PC-3 (cell line): ENCODE measurements at regions of chr2 and their contacts with region 1.

Region 1: GRCh38 chr2:231452799-231453508 is 11.3 kb downstream of the NCL start:
- DNase-seq: peak; percentile 23
- ATAC-seq: peak; percentile 42
- H3K4me3 ChIP-seq: no peak overlapping the region
- H3K27ac ChIP-seq: no peak overlapping the region
- H3K4me1 ChIP-seq: no peaks in the 10 kb centered on the region
- H3K27me3 ChIP-seq: no peaks in the 10 kb centered on the region
- CTCF ChIP-seq: no peak

Region 2: DNA sequence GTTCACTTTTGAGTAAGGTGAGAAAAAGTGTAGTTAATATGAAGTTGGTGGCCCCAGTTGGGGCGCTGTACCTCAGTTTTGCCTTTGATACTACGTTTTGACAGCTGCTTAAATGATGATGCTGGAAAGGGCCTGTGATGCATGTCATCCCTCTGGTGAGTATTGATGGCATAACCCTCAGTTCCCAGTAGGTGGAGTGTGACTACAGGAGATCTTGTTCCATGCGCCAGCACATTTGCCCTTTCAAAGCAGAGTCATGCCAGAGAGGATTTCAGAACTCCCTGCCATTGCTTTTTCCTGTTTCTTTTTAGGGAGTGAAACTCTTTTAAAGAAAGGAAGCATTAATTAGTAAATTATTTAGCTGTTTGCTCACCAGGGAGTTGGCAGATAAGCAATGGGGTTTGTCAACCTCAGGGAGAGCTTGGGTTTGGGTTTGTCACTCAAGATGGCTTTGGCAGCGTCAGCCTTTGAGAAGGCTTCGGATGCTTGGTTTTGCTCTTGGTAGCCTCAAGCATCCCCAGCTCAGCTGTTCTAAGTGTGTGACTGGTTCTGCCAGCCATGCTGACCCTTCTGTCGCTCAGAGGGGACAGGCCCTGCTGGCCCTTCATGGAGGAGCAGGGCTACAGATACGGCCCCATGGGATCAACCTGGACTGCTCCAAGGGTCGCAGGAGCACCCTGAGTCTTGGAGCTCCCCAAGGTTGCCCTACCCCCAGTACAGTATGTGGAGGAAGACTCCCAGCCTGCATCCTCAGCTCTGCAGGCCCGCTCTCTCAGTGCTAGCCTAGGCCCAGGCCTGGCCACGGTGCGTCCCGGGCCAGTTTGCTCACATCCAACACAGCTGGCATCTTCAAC is 225.4 kb before region 1 on chr2:
- CTCF ChIA-PET with region 1: no interaction called
- POLR2A ChIA-PET with region 1: no interaction called
- intact Hi-C with region 1: loop called (anchors 1 kb)
- DNase-seq: peak; percentile 84
- ATAC-seq: peak; percentile 97
- H3K4me3 ChIP-seq: no peak overlapping the region
- H3K27ac ChIP-seq: no peak overlapping the region
- H3K4me1 ChIP-seq: no peaks in the 10 kb centered on the region
- H3K27me3 ChIP-seq: no peaks in the 10 kb centered on the region
- CTCF ChIP-seq: peak; percentile 89

Region 3: GRCh38 chr2:231399853-231400680 is 52.9 kb before region 1 on chr2:
- CTCF ChIA-PET with region 1: interaction called, 16 read pairs
- POLR2A ChIA-PET with region 1: no interaction called
- intact Hi-C with region 1: no loop called
- DNase-seq: peak; percentile 67
- ATAC-seq: peak; percentile 92
- H3K4me3 ChIP-seq: no peak overlapping the region
- H3K27ac ChIP-seq: peak overlapping the region; percentile 66
- H3K4me1 ChIP-seq: peaks cover 37% of the 10 kb centered on the region
- H3K27me3 ChIP-seq: no peaks in the 10 kb centered on the region
- CTCF ChIP-seq: no peak

Region 4: GRCh38 chr2:231601349-231602229 is 148.6 kb after region 1 on chr2:
- CTCF ChIA-PET with region 1: no interaction called
- POLR2A ChIA-PET with region 1: no interaction called
- intact Hi-C with region 1: no loop called
- DNase-seq: peak; percentile 85
- ATAC-seq: peak; percentile 57
- H3K4me3 ChIP-seq: no peak overlapping the region
- H3K27ac ChIP-seq: no peak overlapping the region
- H3K4me1 ChIP-seq: peaks cover 16% of the 10 kb centered on the region
- H3K27me3 ChIP-seq: no peaks in the 10 kb centered on the region
- CTCF ChIP-seq: peak; percentile 86